Naive thymus-derived CD4-positive, alpha-beta T cell (primary cell): ENCODE measurements at regions of chr3 and their contacts with region 1.

Region 1: DNA sequence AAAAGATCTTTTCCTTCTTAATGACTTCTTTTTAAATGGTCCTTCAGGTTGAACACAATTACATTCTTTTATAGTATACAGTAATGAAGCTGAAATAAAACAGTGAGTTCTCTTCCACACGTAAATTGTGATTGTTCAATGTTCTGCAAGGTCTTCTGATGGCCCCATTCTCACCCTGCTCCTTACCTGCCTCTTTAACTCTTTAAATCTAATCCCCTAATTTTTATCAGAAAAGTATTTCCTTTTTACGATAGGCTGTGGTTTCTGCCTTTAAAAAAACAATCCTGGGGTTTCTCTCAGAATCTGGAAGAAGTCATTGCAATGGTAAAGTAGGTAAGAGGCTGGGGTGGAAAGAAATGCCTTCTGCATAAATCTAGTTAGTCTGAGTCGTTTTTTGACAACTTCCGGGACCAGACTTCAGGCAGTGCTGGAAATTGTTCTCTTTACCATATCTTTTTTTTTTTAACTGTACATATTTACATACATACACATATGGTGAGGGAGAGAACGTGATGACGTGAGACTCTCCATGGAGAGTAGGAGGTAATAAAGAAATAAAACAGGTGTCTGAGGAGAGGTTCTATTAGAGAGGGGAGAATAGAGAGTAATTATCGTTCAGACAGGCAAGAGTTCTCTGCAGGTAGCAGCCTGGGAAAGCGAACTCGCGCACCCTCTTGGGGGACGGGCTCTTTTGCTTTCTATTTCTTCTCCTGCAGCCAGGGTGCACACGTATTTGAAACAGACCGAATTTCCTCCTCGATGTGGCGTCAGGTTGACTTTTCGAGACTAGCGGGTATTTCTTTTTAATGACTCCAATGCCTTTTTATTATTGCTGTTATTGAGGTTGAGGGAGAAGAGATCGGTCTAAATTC is at the start of gene SIDT1:
- DNase-seq: peak; percentile 31 to 87 (median 78)
- ATAC-seq: peak; percentile 87
- H3K4me3 ChIP-seq: peak within 1 kb of the TSS; percentile 96
- H3K4me3 Mint-ChIP-seq: peak within 1 kb of the TSS; percentile 92 to 100 (median 98)
- H3K27ac ChIP-seq: peak within 1 kb of the TSS; percentile 95
- H3K27ac Mint-ChIP-seq: peak within 1 kb of the TSS; percentile 97 to 100 (median 99)
- H3K4me1 ChIP-seq: peaks cover 28 to 40% of the 10 kb centered on the region in 2 donors
- H3K4me1 Mint-ChIP-seq: peaks cover 33 to 69% (median 57%) of the 10 kb centered on the region in 7 donors
- H3K27me3 ChIP-seq: no peaks in the 10 kb centered on the region
- H3K27me3 Mint-ChIP-seq: peaks cover 0 to 16% (median 0%) of the 10 kb centered on the region in 5 donors
- total RNA-seq, gene SIDT1: 32.1 to 65.7 (median 60.7) TPM

Region 2: DNA sequence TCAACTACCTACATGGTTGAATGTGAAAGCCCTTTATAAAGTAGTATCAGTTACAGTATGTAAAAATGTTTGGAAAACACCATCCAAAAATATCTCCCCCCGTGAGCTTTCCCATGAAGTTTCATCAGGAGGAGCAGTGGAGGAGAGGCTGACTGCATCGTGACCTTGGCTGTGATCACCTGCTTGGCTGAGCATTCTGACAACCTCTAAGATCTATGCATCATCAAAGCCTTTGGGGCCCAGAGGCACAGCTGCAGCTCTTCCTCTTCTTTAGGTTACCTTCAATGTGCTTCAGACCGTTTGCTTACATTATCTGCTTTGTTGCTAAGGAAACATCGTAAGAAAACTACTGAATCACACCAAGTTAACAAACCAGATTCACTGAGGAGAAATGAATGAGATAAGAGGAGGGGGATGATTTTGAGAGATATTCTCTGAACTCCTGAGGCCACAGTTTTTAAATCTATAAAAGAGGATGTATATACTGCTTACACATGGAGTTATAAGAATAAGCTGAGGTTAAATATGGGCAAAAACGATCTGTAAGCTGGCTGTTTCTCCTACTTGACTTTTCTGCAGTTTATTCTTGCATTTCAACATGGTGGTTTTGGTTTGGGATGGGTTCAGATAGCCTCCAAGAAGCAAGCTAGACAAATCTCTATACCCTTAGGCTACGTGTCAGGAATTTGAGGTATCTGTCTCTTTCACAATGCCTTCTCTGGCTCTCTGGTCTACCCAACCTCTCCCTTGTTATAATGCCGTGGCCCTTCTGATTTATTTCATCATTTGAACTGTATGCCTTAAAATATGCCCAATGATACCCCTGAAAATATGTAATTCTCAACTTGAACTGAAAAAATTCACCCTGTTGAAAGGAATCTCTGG is 1403.0 kb before region 1 on chr3:
- CTCF ChIA-PET with region 1: no interaction called
- POLR2A ChIA-PET with region 1: no interaction called
- intact Hi-C with region 1: loop called in 1 of 2 experiments (anchors 10 kb)
- DNase-seq: peak in 8 of 9 donors; percentile 39 to 88 (median 83)
- ATAC-seq: peak; percentile 82
- H3K4me3 ChIP-seq: no peak overlapping the region
- H3K4me3 Mint-ChIP-seq: peak overlapping the region; percentile 23 to 100 (median 64)
- H3K27ac ChIP-seq: peak overlapping the region; percentile 82
- H3K27ac Mint-ChIP-seq: peak overlapping the region; percentile 87 to 95 (median 93)
- H3K4me1 ChIP-seq: peaks cover 41 to 72% of the 10 kb centered on the region in 2 donors
- H3K4me1 Mint-ChIP-seq: peaks cover 49 to 92% (median 90%) of the 10 kb centered on the region in 7 donors
- H3K27me3 ChIP-seq: no peaks in the 10 kb centered on the region
- H3K27me3 Mint-ChIP-seq: no peaks in the 10 kb centered on the region

Region 3: GRCh38 chr3:113495035-113495434 is 37.0 kb before region 1 on chr3:
- CTCF ChIA-PET with region 1: interaction called, 4 read pairs
- POLR2A ChIA-PET with region 1: interaction called, 4 read pairs
- intact Hi-C with region 1: loop called (anchors 1 kb)
- DNase-seq: peak in 6 of 9 donors; percentile 22 to 62 (median 42)
- ATAC-seq: peak; percentile 67
- H3K4me3 ChIP-seq: no peak overlapping the region
- H3K4me3 Mint-ChIP-seq: no peak overlapping the region
- H3K27ac ChIP-seq: no peak overlapping the region
- H3K27ac Mint-ChIP-seq: no peak overlapping the region
- H3K4me1 ChIP-seq: no peaks in the 10 kb centered on the region
- H3K4me1 Mint-ChIP-seq: peaks cover 0 to 10% (median under 1%) of the 10 kb centered on the region in 7 donors
- H3K27me3 ChIP-seq: no peaks in the 10 kb centered on the region
- H3K27me3 Mint-ChIP-seq: no peaks in the 10 kb centered on the region

Region 4: DNA sequence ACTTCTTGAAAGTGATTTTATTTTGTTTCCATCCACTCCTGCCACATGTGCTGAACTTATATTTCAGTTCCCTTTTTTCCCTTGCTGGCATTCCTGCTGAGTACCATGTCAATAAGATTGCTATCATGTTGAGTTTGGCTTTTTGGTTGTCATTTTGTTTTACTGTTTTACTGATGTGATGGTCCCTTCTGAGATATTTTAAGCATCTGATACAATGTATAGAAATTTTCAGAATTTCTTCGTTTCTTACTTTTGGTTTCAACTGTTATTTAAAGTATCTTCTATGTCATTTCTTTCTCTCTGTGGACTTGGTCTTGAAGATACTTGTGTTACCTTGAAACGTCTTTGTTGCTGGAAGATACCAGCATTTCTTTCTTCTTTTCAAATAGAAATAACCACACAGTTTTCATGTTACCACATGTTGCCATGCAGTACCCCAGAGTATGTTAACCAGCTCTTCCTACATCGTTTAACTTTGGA is 14.4 kb after region 1 on chr3:
- CTCF ChIA-PET with region 1: no interaction called
- POLR2A ChIA-PET with region 1: interaction called, 4 read pairs
- intact Hi-C with region 1: loop called in 1 of 2 experiments (anchors 1 kb)
- DNase-seq: no peak
- ATAC-seq: no peak
- H3K4me3 ChIP-seq: no peak overlapping the region
- H3K4me3 Mint-ChIP-seq: peak overlapping the region in 4 of 10 donors; percentile 12 to 42 (median 26)
- H3K27ac ChIP-seq: no peak overlapping the region
- H3K27ac Mint-ChIP-seq: peak overlapping the region in 5 of 9 donors; percentile 5 to 67 (median 21)
- H3K4me1 ChIP-seq: no peaks in the 10 kb centered on the region
- H3K4me1 Mint-ChIP-seq: peaks cover 23 to 75% (median 68%) of the 10 kb centered on the region in 7 donors
- H3K27me3 ChIP-seq: no peaks in the 10 kb centered on the region
- H3K27me3 Mint-ChIP-seq: no peaks in the 10 kb centered on the region

Region 5: DNA sequence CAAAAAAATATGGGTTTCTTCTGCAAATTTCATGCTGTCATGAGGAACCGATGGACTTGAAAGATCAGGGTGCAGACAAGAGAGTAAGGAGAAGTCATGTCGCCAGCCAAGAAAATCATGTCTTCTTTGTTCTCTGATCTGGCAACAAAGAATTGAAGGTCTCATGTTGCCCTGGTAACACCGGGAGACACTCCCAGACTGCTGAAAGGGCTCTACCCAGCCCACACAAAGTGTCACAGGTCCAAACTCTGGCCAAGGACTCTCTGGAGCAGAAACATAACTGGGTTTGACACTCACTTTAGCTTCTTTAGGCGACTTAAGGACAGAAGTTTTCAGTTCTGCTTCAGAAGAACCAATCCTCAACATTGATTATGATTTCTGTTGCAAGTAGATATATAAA is 43.1 kb after region 1 on chr3:
- CTCF ChIA-PET with region 1: interaction called, 4 read pairs
- POLR2A ChIA-PET with region 1: no interaction called
- intact Hi-C with region 1: loop called (anchors 1 kb)
- DNase-seq: no peak
- ATAC-seq: no peak
- H3K4me3 ChIP-seq: no peak overlapping the region
- H3K4me3 Mint-ChIP-seq: no peak overlapping the region
- H3K27ac ChIP-seq: no peak overlapping the region
- H3K27ac Mint-ChIP-seq: peak overlapping the region in 8 of 9 donors; percentile 10 to 79 (median 66)
- H3K4me1 ChIP-seq: no peaks in the 10 kb centered on the region
- H3K4me1 Mint-ChIP-seq: peaks cover 3 to 21% (median 13%) of the 10 kb centered on the region in 7 donors
- H3K27me3 ChIP-seq: no peaks in the 10 kb centered on the region
- H3K27me3 Mint-ChIP-seq: no peaks in the 10 kb centered on the region

Region 6: DNA sequence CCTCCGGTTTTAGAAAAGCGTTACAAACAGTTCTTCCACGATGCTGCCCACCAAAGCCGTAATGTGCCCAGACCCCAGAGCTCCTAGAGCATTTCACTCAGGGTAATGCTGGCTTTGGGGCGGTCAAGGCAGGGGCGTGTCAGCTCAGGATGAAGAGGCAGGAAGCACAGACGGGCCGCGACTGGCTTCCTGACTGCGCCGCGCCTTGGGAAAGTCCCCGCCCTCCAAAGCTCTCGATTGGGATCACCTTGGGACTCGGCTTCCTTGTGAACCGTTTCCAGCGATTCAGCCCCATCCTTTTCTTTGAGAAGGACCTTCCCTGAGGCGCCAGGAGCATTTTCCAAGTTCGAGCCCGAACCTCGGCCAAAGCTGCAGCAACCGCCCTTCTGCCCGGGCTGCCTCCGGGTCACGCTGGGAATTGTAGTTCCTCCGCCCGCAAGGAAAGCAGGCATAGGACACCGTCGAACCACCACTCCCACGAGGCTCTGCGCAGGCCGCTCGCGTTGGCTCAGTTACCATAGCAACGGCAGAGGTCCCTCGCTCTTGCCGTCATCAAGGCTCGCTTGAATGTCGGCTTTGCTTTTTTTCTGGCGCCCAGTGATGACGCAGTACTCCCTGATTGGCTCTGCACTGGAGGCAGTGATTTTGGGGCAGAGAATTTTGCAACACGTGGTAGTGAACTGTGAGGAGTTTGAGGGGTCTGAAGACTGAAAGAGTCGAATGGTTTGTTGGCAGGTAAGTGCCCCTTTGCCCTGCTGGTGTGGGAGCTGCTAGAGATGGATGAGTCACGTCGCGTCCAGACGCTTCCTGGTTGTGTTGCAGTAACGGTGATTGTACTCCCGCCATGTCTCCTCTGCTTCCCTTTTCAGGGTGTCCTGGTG is 524.3 kb after region 1 on chr3 and contains the starts of genes CCDC191 and QTRT2:
- CTCF ChIA-PET with region 1: no interaction called
- POLR2A ChIA-PET with region 1: no interaction called
- intact Hi-C with region 1: loop called (anchors 5 kb)
- DNase-seq: peak; percentile 82 to 99 (median 98)
- ATAC-seq: peak; percentile 97
- H3K4me3 ChIP-seq: peak within 1 kb of the TSS; percentile 95
- H3K4me3 Mint-ChIP-seq: peak within 1 kb of the TSS; percentile 91 to 100 (median 98)
- H3K27ac ChIP-seq: peak within 1 kb of the TSS; percentile 91
- H3K27ac Mint-ChIP-seq: peak within 1 kb of the TSS; percentile 87 to 99 (median 97)
- H3K4me1 ChIP-seq: peaks cover 10 to 12% of the 10 kb centered on the region in 2 donors
- H3K4me1 Mint-ChIP-seq: peaks cover 24 to 60% (median 55%) of the 10 kb centered on the region in 7 donors
- H3K27me3 ChIP-seq: no peaks in the 10 kb centered on the region
- H3K27me3 Mint-ChIP-seq: peaks cover 0 to 2% (median 0%) of the 10 kb centered on the region in 5 donors
- total RNA-seq, gene CCDC191: 3.9 to 8.8 (median 5.1) TPM
- total RNA-seq, gene QTRT2: 29.9 to 38.8 (median 33.8) TPM